SK-N-SH (cell line): ENCODE measurements at regions of chr20 and their contacts with region 1.

Region 1: DNA sequence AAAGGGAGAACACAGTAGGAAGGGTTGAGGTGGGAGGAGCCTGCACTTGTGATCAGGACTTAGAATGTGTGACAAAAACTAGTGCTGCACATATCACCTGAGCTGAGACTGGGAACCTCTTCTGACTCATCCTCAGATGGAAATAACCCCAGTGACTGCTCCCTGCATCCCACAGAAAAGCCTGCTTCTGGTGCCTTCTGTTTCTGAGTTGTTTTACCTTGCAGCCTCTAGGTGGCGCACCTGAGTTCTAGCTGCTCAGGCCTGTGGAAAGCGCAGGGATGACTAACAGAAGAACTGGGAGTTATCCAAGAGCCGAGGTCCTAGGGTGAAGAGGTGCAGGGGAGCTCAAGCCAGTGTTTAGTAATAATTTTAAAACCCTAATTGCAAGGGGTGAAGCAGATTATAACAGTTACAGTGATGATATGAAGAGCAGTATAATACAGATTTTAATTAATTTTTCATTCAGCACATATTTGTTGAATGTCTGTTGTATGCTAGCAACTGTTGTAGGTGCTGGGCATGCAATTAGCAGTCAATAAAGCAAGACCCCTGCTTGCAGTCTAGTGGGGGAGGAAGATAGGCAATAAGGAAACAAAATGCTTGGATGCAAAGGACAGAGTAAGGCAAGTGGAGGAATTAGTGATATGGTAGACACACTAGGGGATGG is 302.5 kb downstream of the DHX35 start:
- DNase-seq: peak; percentile 64
- H3K4me3 ChIP-seq: no peak overlapping the region; a peak in 1 of 4 replicates
- H3K27ac ChIP-seq: no peak overlapping the region
- H3K4me1 ChIP-seq: peaks cover 0 to 11% of the 10 kb centered on the region in 2 experiments; a peak in 1 of 4 replicates
- H3K27me3 ChIP-seq: no peaks in the 10 kb centered on the region
- CTCF ChIP-seq: peak; percentile 83
- EP300 ChIP-seq: no peak
- RAD21 ChIP-seq: peak; percentile 67

Region 2: GRCh38 chr20:39103732-39104131 is 160.9 kb before region 1 on chr20:
- CTCF ChIA-PET with region 1: interaction called, 119 read pairs
- POLR2A ChIA-PET with region 1: no interaction called
- DNase-seq: no peak
- H3K4me3 ChIP-seq: no peak overlapping the region
- H3K27ac ChIP-seq: no peak overlapping the region
- H3K4me1 ChIP-seq: no peaks in the 10 kb centered on the region
- H3K27me3 ChIP-seq: no peaks in the 10 kb centered on the region
- CTCF ChIP-seq: no peak; the same call in 1 of the 2 replicates
- EP300 ChIP-seq: no peak
- RAD21 ChIP-seq: no peak

Region 3: GRCh38 chr20:39234520-39235095 is 30.0 kb before region 1 on chr20:
- CTCF ChIA-PET with region 1: interaction called, 10 read pairs
- POLR2A ChIA-PET with region 1: no interaction called
- DNase-seq: no peak
- H3K4me3 ChIP-seq: no peak overlapping the region
- H3K27ac ChIP-seq: no peak overlapping the region
- H3K4me1 ChIP-seq: no peaks in the 10 kb centered on the region
- H3K27me3 ChIP-seq: no peaks in the 10 kb centered on the region
- CTCF ChIP-seq: no peak
- EP300 ChIP-seq: no peak
- RAD21 ChIP-seq: no peak

Region 4: DNA sequence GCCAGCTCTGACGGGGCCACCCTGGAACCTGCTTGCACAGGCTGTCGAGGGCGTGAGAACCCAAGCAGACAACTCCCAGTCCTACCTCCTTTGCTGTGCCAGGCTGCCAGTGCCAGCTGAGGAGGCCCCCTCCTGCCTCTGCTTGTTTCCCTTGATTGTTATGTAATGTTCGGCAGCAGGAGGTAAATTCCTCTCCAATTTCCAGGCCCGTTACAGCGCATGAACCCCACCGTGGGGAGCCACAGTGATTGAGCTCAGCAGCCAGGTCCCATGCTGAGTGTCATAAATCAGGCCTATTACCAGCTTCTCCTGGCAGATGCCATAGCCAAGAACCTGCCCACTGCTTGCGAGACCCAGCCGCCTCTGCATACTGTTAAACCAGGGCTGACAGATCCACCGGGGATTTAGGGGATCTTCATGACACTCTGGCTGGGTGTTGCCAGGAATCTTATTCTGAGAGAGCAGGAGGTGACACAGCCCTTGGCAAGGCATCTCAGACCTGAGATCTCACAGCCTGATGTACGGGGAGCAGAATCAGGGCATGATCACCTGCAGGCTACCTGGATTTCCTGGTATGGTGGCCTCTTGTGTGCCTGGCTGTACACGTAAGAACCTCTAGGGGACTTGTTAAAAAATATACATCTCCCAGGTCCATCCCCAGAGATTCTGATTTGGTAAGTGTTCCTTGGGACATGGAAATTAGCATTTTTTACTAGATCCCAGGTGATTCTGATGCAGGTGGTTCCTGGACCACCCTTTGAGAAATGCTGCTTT is 18.2 kb after region 1 on chr20:
- CTCF ChIA-PET with region 1: interaction called, 24 read pairs
- POLR2A ChIA-PET with region 1: no interaction called
- DNase-seq: no peak
- H3K4me3 ChIP-seq: no peak overlapping the region
- H3K27ac ChIP-seq: no peak overlapping the region
- H3K4me1 ChIP-seq: no peaks in the 10 kb centered on the region
- H3K27me3 ChIP-seq: no peaks in the 10 kb centered on the region
- CTCF ChIP-seq: no peak
- EP300 ChIP-seq: no peak
- RAD21 ChIP-seq: no peak

Region 5: DNA sequence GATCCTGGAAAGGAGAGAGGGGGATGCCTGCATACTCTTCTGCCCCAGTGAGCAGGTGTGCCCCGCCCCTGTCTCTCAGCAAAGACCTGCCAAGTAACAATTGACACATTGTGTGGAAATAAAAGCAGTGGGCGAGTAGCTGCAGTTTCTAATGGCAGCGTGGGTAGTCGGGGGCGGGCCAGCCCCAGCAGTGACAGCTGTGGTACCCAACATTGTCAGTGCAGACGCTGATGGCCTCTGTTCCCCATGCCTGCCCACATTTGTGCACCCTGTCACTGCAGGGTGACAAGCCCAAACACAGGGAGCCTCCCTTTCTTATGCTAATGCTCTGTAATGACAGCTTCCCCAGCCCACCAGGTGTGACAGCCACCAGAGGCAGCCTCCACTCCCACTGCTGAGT is 189.3 kb after region 1 on chr20:
- CTCF ChIA-PET with region 1: no interaction called
- POLR2A ChIA-PET with region 1: no interaction called
- DNase-seq: no peak
- H3K4me3 ChIP-seq: no peak overlapping the region
- H3K27ac ChIP-seq: no peak overlapping the region
- H3K4me1 ChIP-seq: no peaks in the 10 kb centered on the region; a peak in 1 of 4 replicates
- H3K27me3 ChIP-seq: no peaks in the 10 kb centered on the region
- CTCF ChIP-seq: no peak
- EP300 ChIP-seq: no peak
- RAD21 ChIP-seq: no peak

Region 6: GRCh38 chr20:40689943-40690835 is 1425.5 kb after region 1 on chr20:
- CTCF ChIA-PET with region 1: interaction called, 13 read pairs
- POLR2A ChIA-PET with region 1: no interaction called
- DNase-seq: peak; percentile 89
- H3K4me3 ChIP-seq: peak overlapping the region; percentile 55 to 77
- H3K27ac ChIP-seq: peak overlapping the region in 1 of 2 experiments; percentile 85; a peak in 2 of 4 replicates
- H3K4me1 ChIP-seq: peaks cover 0 to 11% of the 10 kb centered on the region in 2 experiments; a peak in 1 of 4 replicates
- H3K27me3 ChIP-seq: peaks cover 61% of the 10 kb centered on the region
- CTCF ChIP-seq: peak; percentile 82
- EP300 ChIP-seq: no peak
- RAD21 ChIP-seq: peak; percentile 89